ENCODE measurements at regions of chr22 and their contacts with region 1.

Region 1: DNA sequence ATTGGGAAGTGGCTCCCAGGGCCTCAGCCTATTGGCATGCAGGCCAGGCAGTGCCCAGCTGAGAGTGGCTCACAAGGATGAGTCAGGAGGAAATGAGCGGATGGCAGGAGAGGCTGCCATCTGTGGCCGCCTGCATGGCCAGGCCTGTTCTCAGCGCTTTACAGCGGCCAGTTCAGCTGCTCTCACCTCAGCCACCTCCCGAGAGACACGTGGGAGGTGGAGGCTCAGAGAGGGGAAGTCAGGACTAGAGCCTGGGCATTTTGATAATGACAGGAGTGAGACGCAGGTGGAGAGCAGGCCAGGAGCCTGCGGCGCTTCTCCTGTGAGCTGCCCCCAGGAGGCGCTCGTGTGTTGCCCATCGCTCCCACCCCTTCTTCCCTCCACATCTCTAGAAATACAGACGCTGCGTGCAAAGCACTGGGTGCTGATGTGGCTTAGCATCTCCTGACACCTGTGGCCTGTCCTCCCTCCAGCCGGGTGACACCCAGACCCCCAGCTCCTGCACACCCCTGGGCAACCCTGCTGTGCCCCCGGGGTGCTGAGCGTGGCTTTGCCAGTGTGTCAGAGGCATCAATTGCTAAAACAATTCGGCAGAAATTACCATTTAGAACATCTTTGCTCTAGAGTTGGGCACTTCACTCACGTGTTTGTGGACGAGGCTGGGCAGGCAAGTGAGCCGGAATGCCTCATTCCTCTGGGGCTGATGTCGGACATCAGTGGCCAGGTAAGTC is 21.4 kb upstream of the PANX2 start:
- DNase-seq: peak; percentile 92
- CTCF ChIP-seq: peak; percentile 87

Region 2: DNA sequence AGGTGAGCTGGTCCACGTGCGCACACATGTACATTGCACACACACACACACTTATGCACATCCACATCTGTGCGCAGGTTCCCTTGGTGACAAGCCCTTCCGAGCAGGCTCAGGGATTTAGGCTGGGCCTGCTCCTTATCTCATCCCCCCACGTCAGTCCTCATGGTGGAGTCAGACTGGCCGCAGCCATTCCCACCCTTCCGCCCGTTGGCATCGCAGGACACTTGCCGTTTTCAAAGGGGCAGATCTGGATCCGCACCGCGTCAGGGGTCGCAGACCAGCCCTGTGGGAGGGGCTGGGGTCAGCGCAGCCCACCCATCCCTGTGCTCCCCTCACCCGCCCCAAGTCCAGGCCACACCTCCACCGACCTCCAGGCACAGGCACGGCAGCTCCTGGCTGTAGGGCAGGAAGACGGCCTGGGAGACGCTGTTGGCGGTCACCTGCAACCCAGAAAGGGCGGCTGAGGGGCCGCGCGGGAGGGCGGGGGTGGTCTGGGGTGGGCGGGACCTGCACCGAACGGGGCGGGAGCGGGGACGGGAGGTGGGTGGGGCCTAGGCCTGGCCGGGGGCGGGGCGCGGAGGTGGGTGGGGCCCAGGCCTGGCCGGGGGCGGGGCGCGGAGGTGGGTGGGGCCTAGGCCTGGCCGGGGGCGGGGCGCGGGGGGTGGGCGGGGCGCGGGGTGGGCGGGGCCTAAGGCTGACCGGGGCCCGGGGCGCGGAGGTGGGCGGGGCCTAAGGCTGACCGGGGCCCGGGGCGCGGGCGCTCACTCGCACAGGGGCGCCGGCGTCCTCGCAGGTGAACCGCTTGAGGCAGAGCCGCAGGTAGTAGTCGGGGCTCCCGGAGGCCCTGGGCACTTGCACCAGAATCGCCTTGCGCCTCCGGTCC is 149.9 kb before region 1 on chr22:
- CTCF ChIA-PET with region 1: no interaction called
- POLR2A ChIA-PET with region 1: no interaction called
- DNase-seq: peak; percentile 54
- CTCF ChIP-seq: no peak

Region 3: GRCh38 chr22:50209893-50210292 is 60.7 kb after region 1 on chr22:
- CTCF ChIA-PET with region 1: interaction called, 23 read pairs
- POLR2A ChIA-PET with region 1: no interaction called
- DNase-seq: peak; percentile 86
- CTCF ChIP-seq: peak; percentile 88

Region 4: GRCh38 chr22:50215297-50216054 is 66.3 kb after region 1 on chr22:
- CTCF ChIA-PET with region 1: interaction called, 21 read pairs
- POLR2A ChIA-PET with region 1: no interaction called
- DNase-seq: no peak
- CTCF ChIP-seq: no peak

Region 5: DNA sequence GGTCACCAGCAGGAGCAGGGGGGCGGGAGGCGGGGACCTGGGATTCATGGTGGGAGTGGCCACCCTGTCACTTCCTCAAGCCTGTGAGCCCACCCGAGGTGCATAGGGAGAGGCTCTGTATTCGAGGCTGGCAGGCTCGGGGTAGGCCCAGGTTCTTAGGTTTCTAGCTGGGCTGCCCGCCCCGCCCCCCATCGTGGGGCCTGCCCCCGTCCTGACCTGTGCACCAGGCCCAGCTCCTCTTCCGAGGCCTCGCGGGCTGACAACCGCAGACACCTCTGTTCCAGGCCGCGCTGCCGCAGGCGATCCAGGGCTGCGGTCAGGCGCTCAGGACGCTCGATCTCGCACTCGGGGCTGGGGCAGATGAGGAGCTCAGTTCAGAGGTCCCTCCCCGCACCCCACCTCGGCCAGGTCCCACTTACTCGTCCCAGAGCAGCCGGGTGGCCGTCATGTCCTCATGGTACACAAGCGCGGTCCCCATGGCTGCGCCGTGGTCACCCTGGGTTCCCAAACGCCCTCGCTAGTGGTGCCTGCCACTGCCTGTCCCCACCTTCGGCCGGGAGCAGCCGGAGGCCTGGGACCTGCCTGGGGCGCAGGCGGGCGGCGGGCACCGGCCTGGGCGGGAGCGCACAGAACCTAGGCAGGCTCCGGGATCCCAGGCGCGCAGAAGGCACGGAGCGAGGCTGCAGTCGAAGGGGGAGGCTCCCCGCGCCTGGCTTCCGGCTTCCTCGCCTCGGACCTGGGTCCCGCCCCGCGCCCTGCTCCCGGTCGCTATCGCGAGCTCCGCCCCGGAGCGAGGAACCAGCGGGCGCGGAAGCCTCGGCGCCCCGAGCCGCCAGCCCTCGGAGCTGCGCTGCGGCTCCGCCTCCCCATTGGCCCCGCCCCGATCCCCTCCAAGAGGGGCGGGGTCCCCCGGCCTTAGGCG is 101.7 kb after region 1 on chr22 and contains the start of gene HDAC10:
- CTCF ChIA-PET with region 1: no interaction called
- POLR2A ChIA-PET with region 1: no interaction called
- DNase-seq: peak; percentile 93
- CTCF ChIP-seq: no peak

Measured in GM10248 (cell line).